ENCODE measurements at regions of chr9 and their contacts with region 1.

Region 1: DNA sequence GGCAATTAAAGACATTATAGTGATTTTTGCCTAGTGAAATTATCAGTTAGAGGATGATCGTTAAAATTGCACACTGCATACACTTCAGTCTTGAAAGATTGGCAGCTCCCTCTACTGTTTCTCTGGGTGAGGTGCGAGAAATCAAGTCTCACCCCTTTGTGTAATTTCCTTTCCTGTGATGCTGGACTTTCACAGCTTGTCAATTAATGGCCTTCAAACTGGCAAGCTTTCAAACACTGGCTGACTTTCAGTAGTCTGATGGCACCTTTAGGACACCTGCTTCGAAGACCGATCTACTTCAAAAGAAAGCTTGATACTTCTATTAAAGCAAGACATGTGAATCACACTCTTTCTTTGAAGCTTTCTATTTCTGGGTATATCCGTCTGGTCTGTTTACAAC is 706.7 kb upstream of the PTPRD start:
- DNase-seq: peak; percentile 51
- H3K4me3 Mint-ChIP-seq: no peak overlapping the region
- H3K27ac Mint-ChIP-seq: no peak overlapping the region
- H3K4me1 Mint-ChIP-seq: no peaks in the 10 kb centered on the region
- H3K27me3 Mint-ChIP-seq: peaks cover 15% of the 10 kb centered on the region
- CTCF ChIP-seq: peak; percentile 61

Region 2: DNA sequence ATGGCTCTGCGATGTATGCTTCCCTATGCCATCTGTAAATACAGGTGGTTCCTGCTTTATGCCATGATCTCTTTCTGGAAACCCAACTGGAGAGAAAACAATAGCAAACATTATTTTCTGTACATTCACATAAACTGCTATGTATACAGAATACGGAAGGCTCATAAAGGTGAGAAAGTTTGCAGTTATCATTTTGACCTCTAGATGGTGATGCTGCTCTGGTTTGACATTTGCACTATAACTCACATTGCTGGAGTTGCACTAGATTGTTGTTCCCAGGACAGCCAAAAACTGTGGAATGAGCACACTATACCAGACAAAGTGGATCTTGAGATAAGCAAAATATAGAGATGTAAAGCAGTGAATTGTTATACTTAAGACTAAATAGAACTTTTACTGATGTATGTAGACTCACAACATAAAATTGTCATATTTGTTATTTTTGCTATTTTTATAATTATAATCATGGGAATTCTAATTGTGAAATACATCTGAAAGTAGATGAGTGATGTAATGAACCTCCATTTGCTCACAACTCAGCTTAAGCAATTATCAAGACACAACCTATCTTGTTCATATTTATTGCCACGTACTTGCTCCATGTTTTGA is 953.3 kb before region 1 on chr9:
- CTCF ChIA-PET with region 1: interaction called, 3 read pairs
- POLR2A ChIA-PET with region 1: no interaction called
- intact Hi-C with region 1: loop called (anchors 1 kb)
- DNase-seq: peak; percentile 59
- H3K4me3 Mint-ChIP-seq: no peak overlapping the region
- H3K27ac Mint-ChIP-seq: no peak overlapping the region
- H3K4me1 Mint-ChIP-seq: no peaks in the 10 kb centered on the region
- H3K27me3 Mint-ChIP-seq: peaks cover 80% of the 10 kb centered on the region
- CTCF ChIP-seq: peak; percentile 70

Region 3: DNA sequence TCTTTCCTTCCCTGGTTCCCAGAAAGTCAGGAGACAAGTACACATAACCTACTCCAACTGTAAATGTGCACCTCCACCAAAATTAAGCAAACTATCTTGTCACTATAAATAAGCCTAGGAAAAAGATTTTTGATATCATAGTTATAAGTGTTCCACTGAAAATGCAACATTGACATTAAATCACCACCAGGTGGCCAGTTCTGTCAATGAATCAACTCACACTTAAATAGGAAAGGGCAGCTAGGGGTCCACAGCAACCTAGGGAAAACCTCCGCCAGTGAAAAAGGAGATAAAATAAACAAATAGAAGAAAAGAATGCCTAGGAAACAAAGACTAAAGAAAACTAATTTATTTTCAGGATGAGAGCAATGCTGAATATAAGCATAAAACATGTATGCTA is 463.7 kb before region 1 on chr9:
- CTCF ChIA-PET with region 1: interaction called, 14 read pairs
- POLR2A ChIA-PET with region 1: no interaction called
- intact Hi-C with region 1: loop called (anchors 1 kb)
- DNase-seq: peak; percentile 26
- H3K4me3 Mint-ChIP-seq: no peak overlapping the region
- H3K27ac Mint-ChIP-seq: no peak overlapping the region
- H3K4me1 Mint-ChIP-seq: no peaks in the 10 kb centered on the region
- H3K27me3 Mint-ChIP-seq: peaks cover 19% of the 10 kb centered on the region
- CTCF ChIP-seq: peak; percentile 58

Region 4: GRCh38 chr9:11141357-11141756 is 178.2 kb before region 1 on chr9:
- CTCF ChIA-PET with region 1: no interaction called
- POLR2A ChIA-PET with region 1: no interaction called
- intact Hi-C with region 1: no loop called
- DNase-seq: peak; percentile 5
- H3K4me3 Mint-ChIP-seq: no peak overlapping the region
- H3K27ac Mint-ChIP-seq: no peak overlapping the region
- H3K4me1 Mint-ChIP-seq: no peaks in the 10 kb centered on the region
- H3K27me3 Mint-ChIP-seq: no peaks in the 10 kb centered on the region
- CTCF ChIP-seq: no peak

Region 5: DNA sequence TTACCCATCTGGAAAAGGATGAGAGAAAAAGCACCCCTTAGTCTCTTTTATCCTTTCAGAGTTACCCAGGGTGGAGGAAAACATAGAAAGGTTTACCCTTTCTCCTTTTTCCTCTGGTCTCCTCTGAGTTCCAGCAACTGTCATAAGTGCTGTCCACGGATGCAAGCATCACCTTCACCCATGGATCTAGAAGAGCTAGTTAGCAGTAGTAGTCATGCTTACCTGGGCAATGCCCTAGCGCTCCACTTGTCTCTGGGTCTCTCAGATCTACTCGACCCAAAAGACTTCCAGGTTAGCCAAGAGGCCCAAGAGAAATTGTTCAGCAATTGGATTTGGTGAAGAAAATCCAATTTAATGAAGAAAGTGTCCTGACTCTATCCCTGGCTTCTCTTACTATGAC is 50.5 kb before region 1 on chr9:
- CTCF ChIA-PET with region 1: no interaction called
- POLR2A ChIA-PET with region 1: no interaction called
- intact Hi-C with region 1: no loop called
- DNase-seq: peak; percentile 1
- H3K4me3 Mint-ChIP-seq: no peak overlapping the region
- H3K27ac Mint-ChIP-seq: no peak overlapping the region
- H3K4me1 Mint-ChIP-seq: no peaks in the 10 kb centered on the region
- H3K27me3 Mint-ChIP-seq: no peaks in the 10 kb centered on the region
- CTCF ChIP-seq: no peak

Region 6: DNA sequence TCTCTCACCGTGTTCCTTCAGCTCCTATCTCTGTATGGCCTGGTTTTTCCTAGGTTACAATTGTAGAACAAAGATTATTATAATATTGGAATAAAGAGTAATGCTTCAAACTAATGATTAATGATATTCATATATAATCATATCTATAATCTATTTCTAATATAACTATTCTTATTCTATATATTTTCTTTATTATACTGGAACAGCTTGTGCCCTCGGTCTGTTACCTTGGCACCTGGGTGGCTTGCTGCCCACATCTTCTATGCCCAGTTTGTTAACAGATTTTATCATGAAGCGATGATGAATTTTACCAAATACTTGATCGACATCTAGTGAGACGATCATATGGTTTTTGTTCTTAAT is 1010.1 kb after region 1 on chr9:
- CTCF ChIA-PET with region 1: interaction called, 3 read pairs
- POLR2A ChIA-PET with region 1: no interaction called
- intact Hi-C with region 1: loop called (anchors 5 kb)
- DNase-seq: no peak
- H3K4me3 Mint-ChIP-seq: no peak overlapping the region
- H3K27ac Mint-ChIP-seq: no peak overlapping the region
- H3K4me1 Mint-ChIP-seq: no peaks in the 10 kb centered on the region
- H3K27me3 Mint-ChIP-seq: peaks cover 44% of the 10 kb centered on the region
- CTCF ChIP-seq: no peak

Region 7: GRCh38 chr9:12425878-12426864 is 1106.6 kb after region 1 on chr9:
- CTCF ChIA-PET with region 1: no interaction called
- POLR2A ChIA-PET with region 1: no interaction called
- intact Hi-C with region 1: loop called (anchors 2 kb)
- DNase-seq: peak; percentile 38
- H3K4me3 Mint-ChIP-seq: no peak overlapping the region
- H3K27ac Mint-ChIP-seq: no peak overlapping the region
- H3K4me1 Mint-ChIP-seq: no peaks in the 10 kb centered on the region
- H3K27me3 Mint-ChIP-seq: peaks cover 52% of the 10 kb centered on the region
- CTCF ChIP-seq: peak; percentile 41